ENCODE measurements at regions of chr13 and their contacts with region 1.

Region 1: GRCh38 chr13:21573920-21574712 is 29.9 kb downstream of the MICU2 start:
- DNase-seq: peak; percentile 47
- ATAC-seq: peak; percentile 86
- H3K4me3 ChIP-seq: no peak overlapping the region
- H3K27ac ChIP-seq: no peak overlapping the region
- H3K4me1 ChIP-seq: peaks cover 20% of the 10 kb centered on the region
- H3K27me3 ChIP-seq: no peaks in the 10 kb centered on the region
- CTCF ChIP-seq: no peak
- EP300 ChIP-seq: no peak
- POLR2A ChIP-seq: no peak
- RAD21 ChIP-seq: no peak

Region 2: DNA sequence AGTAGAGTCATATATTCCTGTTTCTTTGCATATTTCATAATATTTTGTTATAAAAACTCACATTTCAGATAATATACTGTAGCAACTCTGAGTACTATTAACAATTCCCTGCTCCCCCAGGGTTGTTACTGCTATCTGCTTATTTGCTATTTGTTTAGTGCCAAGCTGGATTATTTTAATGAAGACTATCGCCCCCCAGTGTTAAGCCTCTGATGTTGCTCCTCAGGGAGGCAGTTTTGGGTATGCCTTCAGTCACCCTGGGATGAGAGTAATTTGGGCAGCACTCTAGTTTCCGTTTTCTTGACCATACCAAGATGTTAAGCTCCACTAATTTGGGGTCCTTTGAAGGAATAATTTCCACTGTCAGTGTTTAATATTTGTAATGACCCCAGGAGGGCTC is 16.1 kb before region 1 on chr13:
- CTCF ChIA-PET with region 1: no interaction called
- POLR2A ChIA-PET with region 1: no interaction called
- in situ Hi-C with region 1: no loop called
- intact Hi-C with region 1: loop called (anchors 2 kb)
- DNase-seq: peak; percentile 25
- ATAC-seq: peak; percentile 50; the same call in 2 of the 3 replicates
- H3K4me3 ChIP-seq: no peak overlapping the region
- H3K27ac ChIP-seq: no peak overlapping the region
- H3K4me1 ChIP-seq: no peaks in the 10 kb centered on the region
- H3K27me3 ChIP-seq: no peaks in the 10 kb centered on the region
- CTCF ChIP-seq: peak; percentile 43
- EP300 ChIP-seq: no peak
- POLR2A ChIP-seq: no peak
- RAD21 ChIP-seq: no peak